Activated CD8-positive, alpha-beta memory T cell treated with anti-CD3 and anti-CD28 coated beads, Interleukin-2, amount 10 ng/mL, durations not matched to agents 7 days and 5 days (primary cell): ENCODE measurements at regions of chr6 and their contacts with region 1.

Region 1: GRCh38 chr6:7615611-7616383 is 25.8 kb downstream of the SNRNP48 start:
- DNase-seq: no peak
- ATAC-seq: peak; percentile 54
- H3K4me3 Mint-ChIP-seq: peak overlapping the region; percentile 4
- H3K27ac Mint-ChIP-seq: no peak overlapping the region
- H3K4me1 Mint-ChIP-seq: peaks cover 17% of the 10 kb centered on the region
- H3K27me3 Mint-ChIP-seq: peaks cover 28% of the 10 kb centered on the region

Region 2: GRCh38 chr6:7276199-7276524 is 339.6 kb before region 1 on chr6:
- CTCF ChIA-PET with region 1: interaction called, 70 read pairs
- DNase-seq: no peak
- ATAC-seq: no peak
- H3K4me3 Mint-ChIP-seq: no peak overlapping the region
- H3K27ac Mint-ChIP-seq: no peak overlapping the region
- H3K4me1 Mint-ChIP-seq: peaks cover 7% of the 10 kb centered on the region
- H3K27me3 Mint-ChIP-seq: no peaks in the 10 kb centered on the region

Region 3: DNA sequence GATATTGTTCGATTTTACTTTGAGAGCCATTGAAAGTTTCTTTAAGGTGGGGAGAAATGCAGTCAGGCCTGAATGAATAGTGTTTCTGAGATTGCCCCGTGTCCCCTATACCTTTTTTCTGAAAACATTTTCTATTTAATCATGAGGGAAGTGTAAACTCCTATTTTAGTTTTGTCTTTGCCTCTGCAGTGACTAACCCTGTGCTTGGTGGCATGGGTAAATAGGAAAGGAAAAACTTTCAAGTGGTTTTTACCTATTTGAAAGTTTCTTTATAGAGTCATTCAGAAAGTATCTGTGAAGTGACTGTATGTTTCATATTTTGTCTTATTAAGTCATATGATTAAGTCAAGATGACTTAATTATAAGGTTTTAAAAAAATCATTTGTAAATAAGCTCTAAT is 11.3 kb before region 1 on chr6:
- CTCF ChIA-PET with region 1: interaction called, 11 read pairs
- DNase-seq: no peak
- ATAC-seq: no peak
- H3K4me3 Mint-ChIP-seq: no peak overlapping the region
- H3K27ac Mint-ChIP-seq: no peak overlapping the region
- H3K4me1 Mint-ChIP-seq: peaks cover 12% of the 10 kb centered on the region
- H3K27me3 Mint-ChIP-seq: no peaks in the 10 kb centered on the region